Ascending aorta (tissue), 2 donors: ENCODE measurements at regions of chr3 and their contacts with region 1.

Region 1: DNA sequence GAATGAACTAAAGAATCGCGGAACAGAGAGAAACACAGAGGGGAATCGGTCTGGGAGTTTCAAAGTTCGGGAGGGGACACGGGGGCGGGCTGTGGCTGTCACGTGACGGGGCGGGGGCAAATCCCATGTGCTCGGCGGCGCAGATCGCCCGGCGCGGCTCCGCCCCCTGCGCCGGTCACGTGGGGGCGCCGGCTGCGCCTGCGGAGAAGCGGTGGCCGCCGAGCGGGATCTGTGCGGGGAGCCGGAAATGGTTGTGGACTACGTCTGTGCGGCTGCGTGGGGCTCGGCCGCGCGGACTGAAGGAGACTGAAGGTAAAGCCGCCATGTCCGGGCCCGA is at the start of gene EIF4G1:
- DNase-seq: peak; percentile 78 to 96
- H3K4me3 ChIP-seq: peak within 1 kb of the TSS; percentile 76 to 79
- H3K27ac ChIP-seq: peak within 1 kb of the TSS; percentile 95 to 98
- H3K4me1 ChIP-seq: peaks cover 17 to 33% of the 10 kb centered on the region in 2 donors
- H3K27me3 ChIP-seq: no peaks in the 10 kb centered on the region
- CTCF ChIP-seq: no peak
- total RNA-seq, gene EIF4G1: 192 TPM

Region 2: DNA sequence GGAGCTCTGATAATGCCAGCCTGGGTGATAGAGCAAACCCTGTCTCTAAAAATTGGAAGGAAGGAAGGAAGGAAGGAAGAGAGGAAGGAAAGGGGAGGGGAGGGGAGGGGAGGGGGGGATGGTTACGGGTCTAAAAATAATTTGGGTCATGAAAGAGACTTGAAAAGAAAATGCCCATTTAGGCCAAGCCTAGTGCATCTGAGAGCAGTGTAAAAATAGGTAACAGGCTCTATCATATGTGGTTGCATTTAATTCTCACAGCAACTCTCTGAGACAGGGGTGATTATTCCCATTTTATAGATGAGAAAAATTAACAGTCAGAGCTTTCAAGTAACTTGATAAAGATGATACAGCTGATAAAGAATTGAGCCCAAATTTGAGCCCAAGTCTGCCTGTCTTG is 42.1 kb before region 1 on chr3:
- intact Hi-C with region 1: no loop called
- DNase-seq: no peak
- H3K4me3 ChIP-seq: no peak overlapping the region
- H3K27ac ChIP-seq: no peak overlapping the region
- H3K4me1 ChIP-seq: no peaks in the 10 kb centered on the region
- H3K27me3 ChIP-seq: peaks cover 13% of the 10 kb centered on the region
- CTCF ChIP-seq: no peak

Region 3: GRCh38 chr3:184362668-184363540 is 48.6 kb after region 1 on chr3:
- intact Hi-C with region 1: loop called (anchors 1 kb)
- DNase-seq: peak; percentile 79 to 98
- H3K4me3 ChIP-seq: peak overlapping the region; percentile 64 to 78
- H3K27ac ChIP-seq: peak overlapping the region; percentile 99 to 100
- H3K4me1 ChIP-seq: peaks cover 5 to 15% of the 10 kb centered on the region in 2 donors
- H3K27me3 ChIP-seq: no peaks in the 10 kb centered on the region
- CTCF ChIP-seq: peak in 2 of 3 experiments; percentile 56 to 68